ENCODE measurements at regions of chr12 and their contacts with region 1.

Region 1: GRCh38 chr12:29317556-29318363 is 63.2 kb downstream of the ERGIC2 start:
- DNase-seq: peak; percentile 54
- ATAC-seq: peak; percentile 100
- H3K4me3 ChIP-seq: no peak overlapping the region
- H3K27ac ChIP-seq: no peak overlapping the region
- H3K4me1 ChIP-seq: peaks cover 0 to 15% of the 10 kb centered on the region in 2 experiments; a peak in 2 of 4 replicates
- H3K27me3 ChIP-seq: no peaks in the 10 kb centered on the region
- CTCF ChIP-seq: peak; percentile 80 to 99 (median 92)
- POLR2A ChIP-seq: no peak
- RAD21 ChIP-seq: peak; percentile 94

Region 2: DNA sequence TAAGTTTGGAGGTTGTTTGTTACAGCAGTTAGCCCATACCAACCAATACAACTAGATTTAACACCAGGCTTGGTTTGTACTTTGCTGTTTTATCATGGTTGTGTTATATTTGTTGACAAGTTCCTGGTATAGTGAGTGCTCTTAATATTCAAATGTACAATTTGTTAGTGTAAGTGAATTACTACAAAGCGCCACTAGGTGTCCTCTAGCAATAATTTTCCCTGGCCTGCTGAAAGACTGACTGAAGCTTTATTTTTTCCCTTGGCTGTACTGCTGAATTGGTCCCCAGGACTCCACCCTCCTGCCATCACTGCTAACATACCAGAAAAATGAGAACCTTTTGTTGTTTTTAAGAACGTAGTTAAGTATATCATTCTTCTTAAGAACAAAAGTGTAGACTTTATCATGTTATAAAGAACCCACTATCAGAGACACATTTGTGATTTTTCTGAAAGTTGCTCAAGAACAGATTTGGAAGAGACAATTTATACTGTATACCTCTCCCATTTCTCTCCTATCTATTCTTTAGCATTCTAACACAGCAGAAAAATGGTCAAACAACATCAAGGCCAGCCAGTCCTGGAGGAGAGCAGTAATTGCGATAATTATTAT is 244.0 kb before region 1 on chr12:
- CTCF ChIA-PET with region 1: interaction called, 19 read pairs
- POLR2A ChIA-PET with region 1: no interaction called
- RAD21 ChIA-PET with region 1: interaction called in 1 of 2 experiments, 5 read pairs
- intact Hi-C with region 1: loop called (anchors 2 kb)
- DNase-seq: peak; percentile 35
- ATAC-seq: peak; percentile 88
- H3K4me3 ChIP-seq: no peak overlapping the region
- H3K27ac ChIP-seq: no peak overlapping the region
- H3K4me1 ChIP-seq: no peaks in the 10 kb centered on the region
- H3K27me3 ChIP-seq: no peaks in the 10 kb centered on the region
- CTCF ChIP-seq: peak; percentile 56 to 77 (median 67)
- POLR2A ChIP-seq: no peak
- RAD21 ChIP-seq: peak; percentile 61

Region 3: DNA sequence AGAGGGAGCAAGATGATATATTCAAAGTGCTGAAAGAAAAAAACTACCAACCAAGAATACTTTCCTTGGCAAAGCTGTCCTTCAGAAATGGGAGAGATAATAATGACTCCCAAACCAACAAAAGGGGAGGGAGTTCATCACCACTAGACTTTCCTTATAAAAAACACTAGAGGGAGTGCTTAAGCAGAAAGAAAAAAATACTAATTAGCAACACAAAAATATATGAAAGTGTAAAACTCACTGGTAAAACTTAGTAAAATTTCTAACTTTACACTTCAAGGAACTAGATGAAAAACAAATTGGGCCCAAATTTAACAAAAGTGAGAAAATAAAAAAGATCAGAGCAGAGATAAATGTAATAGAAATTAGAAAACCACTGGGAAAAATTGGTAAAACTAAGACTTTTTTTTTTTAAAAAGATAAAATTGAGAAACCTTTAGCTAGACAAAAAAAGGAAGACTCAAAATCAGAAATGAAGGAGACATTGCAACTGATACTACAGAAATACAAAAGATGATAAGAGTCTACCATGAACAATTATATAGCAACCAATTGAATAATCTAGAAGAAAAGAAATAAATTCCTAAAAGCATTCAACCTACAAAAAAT is 229.0 kb before region 1 on chr12:
- CTCF ChIA-PET with region 1: interaction called, 21 read pairs
- POLR2A ChIA-PET with region 1: no interaction called
- RAD21 ChIA-PET with region 1: interaction called in 1 of 2 experiments, 3 read pairs
- intact Hi-C with region 1: loop called (anchors 2 kb)
- DNase-seq: no peak
- ATAC-seq: peak; percentile 52; the same call in 1 of the 2 replicates
- H3K4me3 ChIP-seq: no peak overlapping the region
- H3K27ac ChIP-seq: no peak overlapping the region
- H3K4me1 ChIP-seq: no peaks in the 10 kb centered on the region
- H3K27me3 ChIP-seq: no peaks in the 10 kb centered on the region
- CTCF ChIP-seq: peak; percentile 32 to 88 (median 67); a peak in 5 of 6 replicates
- POLR2A ChIP-seq: no peak
- RAD21 ChIP-seq: peak; percentile 69